ENCODE measurements at regions of chr10 and their contacts with region 1.

Region 1: DNA sequence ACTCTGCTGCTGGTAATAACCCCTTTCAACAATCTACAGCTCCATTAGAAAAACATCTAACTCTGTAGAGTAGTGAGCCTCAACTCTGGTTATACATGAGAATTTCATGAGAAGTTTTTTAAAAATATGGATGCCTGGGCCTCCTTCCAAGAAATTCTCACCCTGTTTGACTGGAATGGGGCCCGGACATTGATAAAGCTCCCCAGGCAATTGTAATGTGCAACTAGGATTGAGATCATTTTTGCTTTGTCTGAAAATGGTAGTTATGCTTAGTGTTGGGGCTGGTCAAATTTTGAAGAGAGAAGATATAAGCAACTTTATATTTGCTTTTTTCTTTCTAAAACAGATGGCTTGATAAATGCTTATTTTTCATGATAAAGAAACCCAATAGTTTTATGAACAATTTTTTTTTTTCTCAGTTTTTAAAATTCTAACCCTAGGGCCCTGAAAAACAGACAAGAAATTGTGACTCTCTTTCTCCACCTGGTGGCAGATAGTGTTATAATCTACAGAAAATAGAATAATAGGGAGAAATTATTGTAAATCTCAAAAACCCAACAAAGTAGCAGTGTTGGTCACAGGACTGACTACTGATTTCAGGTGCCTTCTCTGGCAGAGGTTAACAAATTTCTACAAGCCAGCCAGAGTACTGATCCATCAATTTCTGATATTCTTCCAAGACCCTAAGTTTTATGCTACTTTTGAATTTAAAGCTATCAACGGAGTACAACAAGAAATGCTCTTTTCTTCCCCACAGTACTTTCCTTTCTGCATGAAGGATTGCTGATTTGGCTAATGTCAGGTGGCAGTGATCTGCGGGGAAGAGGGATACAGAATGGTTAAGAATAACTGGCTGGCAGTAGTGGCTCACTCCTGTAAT is 174.8 kb downstream of the DKK1 start:
- DNase-seq: no peak
- H3K4me3 Mint-ChIP-seq: no peak overlapping the region
- H3K27ac Mint-ChIP-seq: no peak overlapping the region
- H3K4me1 Mint-ChIP-seq: no peaks in the 10 kb centered on the region
- H3K27me3 Mint-ChIP-seq: no peaks in the 10 kb centered on the region

Region 2: DNA sequence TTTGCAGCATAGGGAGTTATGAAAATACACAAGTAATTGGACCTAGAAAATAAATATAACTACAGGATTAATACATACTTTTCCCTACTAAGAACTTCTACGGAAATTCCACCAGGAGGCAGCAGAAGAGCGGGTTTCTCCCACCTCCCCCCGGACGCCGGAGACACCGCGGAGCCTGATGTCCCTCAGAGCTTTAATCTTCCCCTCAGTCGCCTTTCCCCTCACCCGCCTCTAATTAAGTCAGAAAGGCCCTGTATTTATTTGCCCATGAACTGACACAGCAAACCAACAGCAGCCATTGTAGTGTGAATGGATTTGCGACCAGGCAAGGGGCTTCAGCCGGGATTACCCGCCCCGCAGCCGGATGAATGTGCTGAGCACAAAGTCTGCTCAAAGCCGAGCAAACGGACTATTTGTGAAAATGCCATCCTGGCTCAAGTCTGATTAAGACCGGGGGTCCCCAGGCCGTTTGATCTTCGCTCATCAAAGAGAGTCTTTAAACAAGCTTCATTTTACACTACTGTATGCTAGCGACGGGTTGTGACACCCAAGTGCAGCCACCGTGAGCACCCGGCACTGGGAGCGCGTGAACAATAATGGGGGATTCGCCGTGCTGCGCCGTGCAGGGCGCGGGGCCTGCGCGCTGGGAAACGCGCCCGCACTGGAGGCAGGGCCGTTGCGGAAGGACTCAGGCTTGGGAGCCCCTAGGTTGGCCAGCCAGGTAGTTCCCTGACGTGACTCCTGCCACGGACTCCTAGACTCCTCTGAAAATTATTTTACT is 180.4 kb before region 1 on chr10:
- intact Hi-C with region 1: loop called (anchors 2 kb)
- DNase-seq: no peak
- H3K4me3 Mint-ChIP-seq: no peak overlapping the region
- H3K27ac Mint-ChIP-seq: no peak overlapping the region
- H3K4me1 Mint-ChIP-seq: peaks cover 2% of the 10 kb centered on the region
- H3K27me3 Mint-ChIP-seq: peaks cover 38% of the 10 kb centered on the region

Region 3: GRCh38 chr10:52466464-52466863 is 22.4 kb before region 1 on chr10:
- intact Hi-C with region 1: no loop called
- DNase-seq: no peak
- H3K4me3 Mint-ChIP-seq: no peak overlapping the region
- H3K27ac Mint-ChIP-seq: no peak overlapping the region
- H3K4me1 Mint-ChIP-seq: no peaks in the 10 kb centered on the region
- H3K27me3 Mint-ChIP-seq: no peaks in the 10 kb centered on the region

Region 4: DNA sequence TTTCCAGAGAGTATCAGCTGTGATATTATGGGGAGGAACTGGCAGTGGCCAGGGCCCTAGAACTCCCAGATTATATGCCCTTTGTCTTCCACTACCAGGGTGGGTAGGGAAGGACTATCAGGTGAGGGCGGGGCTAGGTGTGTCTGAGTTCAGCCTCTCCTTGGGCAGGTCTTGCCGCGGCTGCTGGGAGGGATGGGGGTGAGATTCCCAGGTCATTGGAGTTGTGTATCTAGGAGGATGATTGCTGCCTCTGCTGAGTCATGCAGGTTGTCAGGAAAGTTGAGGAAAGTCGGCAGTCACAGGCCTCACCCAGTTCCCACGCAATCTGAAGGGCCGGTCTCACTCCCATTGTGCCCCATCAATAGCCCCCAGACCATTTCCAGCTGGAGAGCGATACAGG is 10.4 kb after region 1 on chr10:
- intact Hi-C with region 1: no loop called
- DNase-seq: no peak
- H3K4me3 Mint-ChIP-seq: no peak overlapping the region
- H3K27ac Mint-ChIP-seq: no peak overlapping the region
- H3K4me1 Mint-ChIP-seq: no peaks in the 10 kb centered on the region
- H3K27me3 Mint-ChIP-seq: no peaks in the 10 kb centered on the region